A549 (cell line): ENCODE measurements at regions of chr10 and their contacts with region 1.

Region 1: GRCh38 chr10:67788025-67788886 is 49.7 kb downstream of the DNAJC12 start:
- DNase-seq: peak; percentile 77
- ATAC-seq: peak; percentile 91 to 95
- H3K4me3 ChIP-seq: no peak overlapping the region
- H3K27ac ChIP-seq: peak overlapping the region; percentile 57 to 69
- H3K4me1 ChIP-seq: peaks cover 32% of the 10 kb centered on the region
- CTCF ChIP-seq: peak; percentile 81
- EP300 ChIP-seq: no peak
- POLR2A ChIP-seq: no peak
- RAD21 ChIP-seq: peak; percentile 86 to 93

Region 2: GRCh38 chr10:67587771-67588170 is 200.5 kb before region 1 on chr10:
- CTCF ChIA-PET with region 1: no interaction called
- POLR2A ChIA-PET with region 1: no interaction called
- DNase-seq: no peak
- ATAC-seq: no peak
- H3K4me3 ChIP-seq: no peak overlapping the region
- H3K27ac ChIP-seq: no peak overlapping the region
- H3K4me1 ChIP-seq: no peaks in the 10 kb centered on the region
- CTCF ChIP-seq: no peak
- EP300 ChIP-seq: no peak
- POLR2A ChIP-seq: no peak
- RAD21 ChIP-seq: no peak

Region 3: GRCh38 chr10:67650558-67650957 is 137.7 kb before region 1 on chr10:
- CTCF ChIA-PET with region 1: no interaction called
- POLR2A ChIA-PET with region 1: no interaction called
- DNase-seq: no peak
- ATAC-seq: no peak
- H3K4me3 ChIP-seq: no peak overlapping the region
- H3K27ac ChIP-seq: no peak overlapping the region
- H3K4me1 ChIP-seq: no peaks in the 10 kb centered on the region
- CTCF ChIP-seq: no peak
- EP300 ChIP-seq: no peak
- POLR2A ChIP-seq: no peak
- RAD21 ChIP-seq: no peak

Region 4: GRCh38 chr10:67803588-67804394 is 15.5 kb after region 1 on chr10:
- CTCF ChIA-PET with region 1: interaction called, 19 read pairs
- POLR2A ChIA-PET with region 1: no interaction called
- DNase-seq: peak; percentile 25 to 75
- ATAC-seq: peak; percentile 43 to 73; a peak in 4 of 6 replicates
- H3K4me3 ChIP-seq: no peak overlapping the region
- H3K27ac ChIP-seq: peak overlapping the region; percentile 56 to 68
- H3K4me1 ChIP-seq: peaks cover 24% of the 10 kb centered on the region
- CTCF ChIP-seq: no peak
- EP300 ChIP-seq: peak; percentile 79 to 84; a peak in 4 of 5 replicates
- POLR2A ChIP-seq: no peak
- RAD21 ChIP-seq: peak in 1 of 2 experiments; percentile 41; a peak in 2 of 5 replicates

Region 5: DNA sequence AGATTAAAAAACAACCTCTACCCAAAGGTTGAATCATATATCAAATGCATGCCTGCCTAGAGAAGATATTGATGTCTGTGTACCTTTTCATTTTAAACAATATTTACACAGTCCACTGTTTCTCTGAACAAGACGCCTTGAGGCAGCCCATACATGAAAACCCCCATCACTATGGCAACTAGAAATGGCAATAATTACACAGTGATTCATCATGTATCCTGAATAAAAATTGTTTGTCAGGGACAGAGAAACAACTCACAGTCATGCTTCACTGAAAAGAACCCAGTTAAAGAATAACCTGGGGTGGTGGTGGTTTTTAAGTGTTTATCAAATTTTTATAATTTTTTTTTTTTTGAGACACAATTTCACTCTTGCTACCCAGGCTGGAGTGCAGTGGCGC is 30.1 kb after region 1 on chr10:
- CTCF ChIA-PET with region 1: interaction called, 15 read pairs
- POLR2A ChIA-PET with region 1: no interaction called
- DNase-seq: peak; percentile 73 to 97
- ATAC-seq: peak; percentile 78 to 83
- H3K4me3 ChIP-seq: peak overlapping the region; percentile 17; the same call in 2 of the 3 replicates
- H3K27ac ChIP-seq: peak overlapping the region; percentile 95 to 97
- H3K4me1 ChIP-seq: peaks cover 78% of the 10 kb centered on the region
- CTCF ChIP-seq: no peak
- EP300 ChIP-seq: peak; percentile 86 to 91; a peak in 3 of 5 replicates
- POLR2A ChIP-seq: no peak
- RAD21 ChIP-seq: peak in 1 of 2 experiments; percentile 38; a peak in 2 of 5 replicates

Region 6: DNA sequence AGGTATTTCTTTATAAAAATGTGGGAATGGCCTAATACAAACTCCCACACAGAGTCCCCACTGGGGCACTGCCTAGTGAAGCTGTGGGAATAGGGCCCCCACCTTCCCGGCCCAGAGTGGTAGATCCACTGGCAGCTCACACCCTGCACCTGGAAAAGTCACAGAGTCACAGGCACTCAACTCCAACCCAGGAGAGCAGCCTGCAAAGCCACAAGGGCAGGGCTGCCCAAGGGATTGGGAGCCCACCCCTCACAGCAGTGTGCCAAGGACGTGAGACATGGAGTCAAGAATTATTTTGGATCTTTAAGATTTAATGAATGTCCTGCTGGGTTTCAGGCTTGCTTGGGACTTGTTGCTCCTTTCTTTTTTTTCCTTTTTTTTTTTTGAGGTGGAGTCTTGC is 55.0 kb after region 1 on chr10:
- CTCF ChIA-PET with region 1: interaction called, 15 read pairs
- POLR2A ChIA-PET with region 1: interaction called, 6 read pairs
- DNase-seq: no peak
- ATAC-seq: no peak
- H3K4me3 ChIP-seq: no peak overlapping the region
- H3K27ac ChIP-seq: no peak overlapping the region
- H3K4me1 ChIP-seq: peaks cover 2% of the 10 kb centered on the region; the same call in 1 of the 3 replicates
- CTCF ChIP-seq: no peak
- EP300 ChIP-seq: no peak
- POLR2A ChIP-seq: no peak
- RAD21 ChIP-seq: no peak

Region 7: GRCh38 chr10:67864607-67865371 is 76.5 kb after region 1 on chr10:
- CTCF ChIA-PET with region 1: interaction called, 15 read pairs
- POLR2A ChIA-PET with region 1: no interaction called
- DNase-seq: no peak
- ATAC-seq: no peak
- H3K4me3 ChIP-seq: no peak overlapping the region
- H3K27ac ChIP-seq: no peak overlapping the region
- H3K4me1 ChIP-seq: peaks cover 6% of the 10 kb centered on the region; the same call in 1 of the 3 replicates
- CTCF ChIP-seq: no peak
- EP300 ChIP-seq: no peak
- POLR2A ChIP-seq: no peak
- RAD21 ChIP-seq: no peak